ENCODE measurements at regions of chr6 and their contacts with region 1.

Region 1: DNA sequence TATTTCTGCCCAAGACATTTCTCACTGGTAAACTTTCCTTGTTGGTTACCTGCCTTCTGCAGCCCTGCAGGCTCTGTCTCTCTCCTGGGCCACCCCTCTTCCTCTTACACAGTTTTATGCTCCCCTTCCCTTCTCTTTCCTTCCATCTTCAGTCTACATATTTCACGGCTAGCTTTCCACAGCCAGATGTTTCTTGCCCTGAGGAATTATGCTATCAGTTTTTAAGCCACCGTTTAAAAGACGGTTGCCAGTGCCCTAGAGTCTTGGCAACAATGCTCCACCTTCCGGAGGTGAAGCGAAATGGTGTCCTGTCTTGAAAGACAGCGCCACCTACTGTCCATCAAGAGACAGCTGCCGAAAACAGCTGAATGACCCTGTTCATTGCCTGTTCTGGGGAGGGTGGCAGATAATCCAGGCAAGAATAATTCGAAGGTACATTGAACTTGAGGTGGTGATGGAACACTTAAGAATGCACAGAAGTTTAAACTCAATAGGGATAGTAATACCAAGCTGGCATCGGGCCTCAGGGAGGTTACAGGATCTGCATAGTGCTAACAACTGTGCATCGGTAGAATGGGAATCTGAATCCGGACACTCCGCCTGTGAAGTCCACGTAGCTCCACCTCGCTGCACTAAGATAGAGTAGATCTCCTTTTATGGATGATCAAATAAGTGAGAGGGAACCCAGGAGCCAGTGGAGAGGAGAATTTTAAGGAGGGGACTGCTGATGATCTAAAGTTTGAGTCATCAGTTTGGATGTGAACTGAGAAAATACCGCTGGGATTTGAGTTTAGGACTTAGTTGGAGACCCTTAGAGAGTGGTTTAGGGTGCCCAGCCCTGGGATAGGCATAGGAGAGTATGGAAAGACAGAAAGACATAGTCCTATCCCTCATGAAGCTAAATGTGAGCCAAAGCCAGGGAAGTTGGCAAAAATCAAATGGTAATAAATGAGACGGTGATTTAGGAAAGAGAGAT is 4.8 kb upstream of the TRIM40 start:
- DNase-seq: no peak
- H3K4me3 ChIP-seq: no peak overlapping the region
- H3K27me3 ChIP-seq: peaks cover 27% of the 10 kb centered on the region
- CTCF ChIP-seq: peak; percentile 99

Region 2: DNA sequence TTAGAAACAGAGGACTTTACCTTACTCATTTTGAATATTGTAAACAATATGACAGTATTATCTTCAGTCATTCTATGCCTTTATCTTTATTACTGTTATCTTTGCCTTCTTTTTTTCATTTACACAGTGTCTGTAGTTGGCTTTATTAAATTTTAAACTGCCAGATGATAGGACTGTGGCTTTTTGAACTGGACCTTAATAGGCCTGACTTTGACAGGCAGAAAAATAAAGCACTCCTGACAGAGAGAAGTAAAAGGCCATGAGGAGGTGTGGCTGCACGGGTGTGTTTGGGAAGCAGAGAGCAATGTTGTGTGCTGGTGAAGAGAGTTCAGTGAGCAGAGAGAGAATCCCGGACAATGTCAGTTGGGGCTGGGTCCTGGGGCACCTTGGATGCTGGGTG is 12.6 kb after region 1 on chr6:
- CTCF ChIA-PET with region 1: interaction called, 21 read pairs
- POLR2A ChIA-PET with region 1: no interaction called
- DNase-seq: no peak
- H3K4me3 ChIP-seq: no peak overlapping the region
- H3K27me3 ChIP-seq: peaks cover 12% of the 10 kb centered on the region
- CTCF ChIP-seq: no peak

Region 3: DNA sequence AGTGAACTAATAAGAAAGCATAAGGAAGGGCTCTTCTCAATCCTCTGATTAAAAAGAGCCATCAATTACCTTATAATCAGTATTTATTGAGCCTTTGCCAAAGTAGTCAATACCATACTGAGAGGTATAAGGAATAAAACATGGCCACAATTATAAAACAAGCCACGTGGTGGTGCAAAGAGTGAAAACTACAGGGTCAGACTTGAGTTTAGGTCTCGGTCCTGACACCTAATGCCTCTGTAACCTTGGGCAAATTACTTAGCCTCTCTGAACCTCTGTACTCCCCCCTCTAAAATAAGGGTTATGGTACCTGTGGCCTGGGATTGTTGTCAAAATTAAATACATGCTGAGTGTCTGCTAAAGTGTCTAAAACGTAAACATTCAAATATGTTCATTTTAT is 18.1 kb after region 1 on chr6:
- CTCF ChIA-PET with region 1: interaction called, 39 read pairs
- POLR2A ChIA-PET with region 1: no interaction called
- DNase-seq: no peak
- H3K4me3 ChIP-seq: no peak overlapping the region
- H3K27me3 ChIP-seq: peaks cover 5% of the 10 kb centered on the region
- CTCF ChIP-seq: no peak

Region 4: GRCh38 chr6:30154709-30155519 is 23.7 kb after region 1 on chr6:
- CTCF ChIA-PET with region 1: interaction called, 39 read pairs
- POLR2A ChIA-PET with region 1: no interaction called
- DNase-seq: peak; percentile 51
- H3K4me3 ChIP-seq: no peak overlapping the region
- H3K27me3 ChIP-seq: peaks cover 2% of the 10 kb centered on the region
- CTCF ChIP-seq: no peak

Region 5: GRCh38 chr6:30424549-30424948 is 293.4 kb after region 1 on chr6:
- CTCF ChIA-PET with region 1: no interaction called
- POLR2A ChIA-PET with region 1: no interaction called
- DNase-seq: no peak
- H3K4me3 ChIP-seq: no peak overlapping the region
- H3K27me3 ChIP-seq: peaks cover 7% of the 10 kb centered on the region
- CTCF ChIP-seq: no peak